ENCODE measurements at regions of chr18 and their contacts with region 1.

Region 1: GRCh38 chr18:67217551-67218166 is 298.9 kb downstream of the DSEL start:
- DNase-seq: peak; percentile 21 to 47 (median 45)
- H3K4me3 ChIP-seq: no peak overlapping the region
- H3K4me3 Mint-ChIP-seq: no peak overlapping the region
- H3K27ac ChIP-seq: no peak overlapping the region
- H3K27ac Mint-ChIP-seq: no peak overlapping the region
- H3K4me1 ChIP-seq: no peaks in the 10 kb centered on the region
- H3K4me1 Mint-ChIP-seq: no peaks in the 10 kb centered on the region
- H3K27me3 ChIP-seq: no peaks in the 10 kb centered on the region
- H3K27me3 Mint-ChIP-seq: peaks cover 0 to 4% (median 0%) of the 10 kb centered on the region in 3 donors
- CTCF ChIP-seq: peak; percentile 74

Region 2: DNA sequence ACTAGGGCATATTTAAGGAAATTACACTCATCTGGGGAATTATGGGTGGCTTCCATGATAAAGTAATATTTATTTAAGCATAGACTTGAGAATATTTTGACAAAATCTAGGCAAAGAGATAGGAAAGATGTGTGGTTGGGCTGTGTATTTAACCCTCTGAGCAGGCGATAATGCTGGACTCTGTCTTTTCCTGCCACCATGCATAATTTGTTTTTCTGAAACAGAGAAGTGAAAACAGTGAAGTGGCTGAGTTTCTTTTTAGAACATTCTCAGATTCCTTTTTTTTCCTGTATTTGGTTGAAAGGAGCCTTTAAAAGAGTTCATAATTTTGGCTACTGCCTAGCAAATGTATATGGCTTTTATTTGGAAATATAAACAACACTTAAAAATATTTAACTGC is 509.0 kb before region 1 on chr18:
- intact Hi-C with region 1: no loop called
- DNase-seq: no peak
- H3K4me3 ChIP-seq: no peak overlapping the region
- H3K4me3 Mint-ChIP-seq: no peak overlapping the region
- H3K27ac ChIP-seq: no peak overlapping the region
- H3K27ac Mint-ChIP-seq: peak overlapping the region in 1 of 7 donors; percentile 67
- H3K4me1 ChIP-seq: peaks cover 3 to 11% of the 10 kb centered on the region in 2 donors
- H3K4me1 Mint-ChIP-seq: peaks cover 8% of the 10 kb centered on the region
- H3K27me3 ChIP-seq: no peaks in the 10 kb centered on the region
- H3K27me3 Mint-ChIP-seq: peaks cover 0 to 2% (median 0%) of the 10 kb centered on the region in 3 donors
- CTCF ChIP-seq: no peak

Region 3: DNA sequence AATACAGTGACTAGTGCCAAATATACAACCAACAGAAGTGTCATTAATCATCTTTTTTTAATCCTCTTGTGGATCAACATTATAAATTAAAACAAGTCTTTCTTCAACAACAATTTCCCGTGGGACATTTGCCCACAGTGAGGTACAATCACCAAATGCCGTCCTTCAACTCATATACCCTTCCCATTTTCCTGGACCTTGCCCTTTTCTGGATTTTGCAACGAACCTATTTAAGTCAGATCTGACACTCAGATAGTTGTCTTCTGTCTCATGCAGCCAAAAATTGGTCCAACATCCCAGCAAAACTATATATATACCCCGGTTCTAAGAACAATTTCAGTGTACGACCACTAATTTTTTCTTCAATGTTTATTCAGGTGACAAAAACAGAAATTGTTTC is 25.1 kb before region 1 on chr18:
- intact Hi-C with region 1: no loop called
- DNase-seq: no peak
- H3K4me3 ChIP-seq: no peak overlapping the region
- H3K4me3 Mint-ChIP-seq: no peak overlapping the region
- H3K27ac ChIP-seq: no peak overlapping the region
- H3K27ac Mint-ChIP-seq: no peak overlapping the region
- H3K4me1 ChIP-seq: no peaks in the 10 kb centered on the region
- H3K4me1 Mint-ChIP-seq: no peaks in the 10 kb centered on the region
- H3K27me3 ChIP-seq: no peaks in the 10 kb centered on the region
- H3K27me3 Mint-ChIP-seq: peaks cover 0 to 7% (median 1%) of the 10 kb centered on the region in 3 donors
- CTCF ChIP-seq: no peak

Region 4: GRCh38 chr18:67290421-67290820 is 72.8 kb after region 1 on chr18:
- intact Hi-C with region 1: no loop called
- DNase-seq: no peak
- H3K4me3 ChIP-seq: no peak overlapping the region
- H3K4me3 Mint-ChIP-seq: no peak overlapping the region
- H3K27ac ChIP-seq: no peak overlapping the region
- H3K27ac Mint-ChIP-seq: no peak overlapping the region
- H3K4me1 ChIP-seq: no peaks in the 10 kb centered on the region
- H3K4me1 Mint-ChIP-seq: no peaks in the 10 kb centered on the region
- H3K27me3 ChIP-seq: no peaks in the 10 kb centered on the region
- H3K27me3 Mint-ChIP-seq: peaks cover 0 to 2% (median 0%) of the 10 kb centered on the region in 3 donors
- CTCF ChIP-seq: no peak

Region 5: GRCh38 chr18:68660354-68661183 is 1442.9 kb after region 1 on chr18:
- intact Hi-C with region 1: loop called (anchors 10 kb)
- DNase-seq: peak in 1 of 3 donors; percentile 7
- H3K4me3 ChIP-seq: no peak overlapping the region
- H3K4me3 Mint-ChIP-seq: no peak overlapping the region
- H3K27ac ChIP-seq: no peak overlapping the region
- H3K27ac Mint-ChIP-seq: no peak overlapping the region
- H3K4me1 ChIP-seq: peaks cover 0 to 10% of the 10 kb centered on the region in 2 donors
- H3K4me1 Mint-ChIP-seq: peaks cover 10% of the 10 kb centered on the region
- H3K27me3 ChIP-seq: no peaks in the 10 kb centered on the region
- H3K27me3 Mint-ChIP-seq: peaks cover 0 to 4% (median 1%) of the 10 kb centered on the region in 3 donors
- CTCF ChIP-seq: peak; percentile 69

Region 6: DNA sequence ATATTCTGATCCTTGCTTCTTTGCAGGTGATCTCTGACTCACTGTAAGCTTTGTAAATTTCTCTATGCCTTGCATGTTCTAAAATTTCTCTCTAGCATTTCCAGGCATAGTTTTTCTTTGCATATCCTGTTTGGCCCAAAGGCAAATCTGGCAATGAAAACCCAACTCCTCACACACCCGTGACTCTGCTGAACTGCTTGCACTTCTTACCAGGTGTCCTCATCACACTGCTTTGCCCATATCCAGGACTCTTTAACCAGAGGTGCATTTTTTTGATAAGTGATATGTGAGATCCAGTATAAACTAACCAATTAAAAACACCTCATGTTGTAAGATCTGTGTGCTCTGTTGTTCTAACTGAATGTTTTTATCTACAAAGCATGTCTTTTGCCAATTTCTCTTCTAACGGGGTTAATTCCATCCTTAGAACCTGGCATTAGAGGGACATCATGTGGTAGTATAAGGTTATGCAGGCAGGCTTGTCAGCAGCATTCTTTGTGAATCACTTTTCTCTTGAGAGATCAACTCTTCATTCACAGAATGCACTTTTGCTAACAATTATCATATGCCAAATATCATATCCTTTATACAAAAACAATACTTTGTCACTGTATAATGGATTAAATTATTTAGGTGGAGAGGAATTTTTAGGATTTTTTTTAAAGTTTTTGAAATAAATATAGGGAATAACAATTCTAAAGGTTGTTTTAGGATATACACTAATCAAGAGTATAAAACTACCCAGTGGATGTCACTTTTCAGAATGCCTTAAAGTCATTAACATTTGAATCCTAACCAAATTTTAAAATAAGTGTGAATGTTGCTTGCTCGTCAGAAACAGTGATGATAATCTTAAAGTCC is 1518.1 kb after region 1 on chr18:
- intact Hi-C with region 1: loop called in 1 of 2 experiments (anchors 5 kb)
- DNase-seq: peak; percentile 15 to 47 (median 46)
- H3K4me3 ChIP-seq: no peak overlapping the region
- H3K4me3 Mint-ChIP-seq: no peak overlapping the region
- H3K27ac ChIP-seq: no peak overlapping the region
- H3K27ac Mint-ChIP-seq: no peak overlapping the region
- H3K4me1 ChIP-seq: no peaks in the 10 kb centered on the region
- H3K4me1 Mint-ChIP-seq: no peaks in the 10 kb centered on the region
- H3K27me3 ChIP-seq: no peaks in the 10 kb centered on the region
- H3K27me3 Mint-ChIP-seq: no peaks in the 10 kb centered on the region
- CTCF ChIP-seq: peak; percentile 86

Measured in CD14-positive monocyte (primary cell).